SK-N-SH (cell line): ENCODE measurements at regions of chr4 and their contacts with region 1.

Region 1: GRCh38 chr4:119628308-119629141 is at the start of gene PDE5A:
- DNase-seq: peak; percentile 85
- H3K4me3 ChIP-seq: peak within 1 kb of the TSS; percentile 82 to 89
- H3K27ac ChIP-seq: peak within 1 kb of the TSS in 1 of 2 experiments; percentile 50; a peak in 3 of 4 replicates
- H3K4me1 ChIP-seq: peaks cover 5 to 7% of the 10 kb centered on the region in 2 experiments; a peak in 3 of 4 replicates
- H3K27me3 ChIP-seq: no peaks in the 10 kb centered on the region
- CTCF ChIP-seq: peak; percentile 88
- EP300 ChIP-seq: no peak
- RAD21 ChIP-seq: peak; percentile 81
- polyA plus RNA-seq, gene PDE5A: 6.4 and 10.1 TPM in 2 replicates

Region 2: DNA sequence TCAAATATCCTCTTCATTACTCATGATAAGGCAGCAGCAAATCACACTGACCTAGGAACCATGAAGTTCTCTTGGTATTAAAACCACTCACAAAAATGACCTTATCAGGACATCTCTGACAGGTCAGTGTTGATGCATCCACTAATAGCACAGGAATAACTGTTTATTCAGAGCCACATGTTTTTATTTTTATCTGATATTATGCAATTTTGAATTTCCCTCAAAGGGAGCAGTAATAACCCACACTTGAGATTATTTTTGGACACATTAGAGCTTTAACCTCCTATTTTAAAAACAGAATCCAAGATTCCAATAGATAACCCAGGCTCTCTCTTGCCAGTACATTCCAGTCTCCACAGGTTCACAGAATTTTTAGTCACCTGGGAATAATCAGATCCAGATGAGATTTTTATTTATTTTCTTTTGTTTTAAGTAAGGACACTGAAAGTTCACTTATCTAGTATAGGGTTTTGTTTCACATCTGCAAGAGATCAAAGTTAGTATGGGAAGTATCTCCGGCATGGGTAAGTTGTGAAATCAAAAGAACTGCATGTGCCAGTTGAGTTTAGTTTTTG is 529.2 kb before region 1 on chr4:
- CTCF ChIA-PET with region 1: no interaction called
- POLR2A ChIA-PET with region 1: no interaction called
- DNase-seq: peak; percentile 27
- H3K4me3 ChIP-seq: no peak overlapping the region
- H3K27ac ChIP-seq: 0 out of 4 replicates have a peak overlapping the region, but pooled peaks of 1 of the 2 experiments have one; percentile 9
- H3K4me1 ChIP-seq: peaks cover 4 to 23% of the 10 kb centered on the region in 2 experiments; a peak in 2 of 4 replicates
- H3K27me3 ChIP-seq: no peaks in the 10 kb centered on the region
- CTCF ChIP-seq: no peak
- EP300 ChIP-seq: peak; percentile 19 to 86; a peak in 3 of 4 replicates
- RAD21 ChIP-seq: no peak

Region 3: DNA sequence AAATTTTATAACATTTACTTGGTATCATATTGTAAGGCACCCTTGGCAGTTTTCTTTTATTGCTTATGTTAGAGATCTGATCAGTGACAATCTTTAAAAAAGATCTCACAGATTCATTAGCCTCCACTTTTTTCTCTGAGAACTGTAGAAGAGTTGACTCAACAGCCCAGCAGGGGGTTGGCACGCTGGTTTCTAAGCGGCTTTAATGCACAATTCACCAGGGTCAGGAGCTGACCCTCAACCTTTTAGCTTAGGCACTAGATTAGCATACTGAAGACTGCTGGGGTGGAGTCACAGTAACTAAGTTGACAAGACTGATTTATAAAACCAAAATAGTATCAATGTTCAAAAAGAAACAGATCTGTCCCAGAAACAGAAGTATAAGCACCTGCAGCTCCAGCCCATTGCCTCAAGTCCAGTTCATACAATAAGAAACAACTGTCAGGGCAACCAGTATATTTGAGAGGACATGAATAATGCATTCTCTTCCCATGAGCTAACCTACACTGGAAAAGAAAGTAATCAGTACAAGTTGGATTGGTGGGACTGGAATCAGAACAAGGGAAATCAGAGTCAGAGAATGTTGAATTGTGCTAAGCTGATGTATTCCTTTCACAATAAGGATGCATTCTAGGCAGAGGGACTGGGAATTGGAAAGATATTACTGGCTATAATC is 77.5 kb before region 1 on chr4:
- CTCF ChIA-PET with region 1: interaction called, 68 read pairs
- POLR2A ChIA-PET with region 1: no interaction called
- DNase-seq: no peak
- H3K4me3 ChIP-seq: no peak overlapping the region
- H3K27ac ChIP-seq: no peak overlapping the region
- H3K4me1 ChIP-seq: no peaks in the 10 kb centered on the region; a peak in 2 of 4 replicates
- H3K27me3 ChIP-seq: no peaks in the 10 kb centered on the region
- CTCF ChIP-seq: no peak
- EP300 ChIP-seq: no peak
- RAD21 ChIP-seq: no peak

Region 4: DNA sequence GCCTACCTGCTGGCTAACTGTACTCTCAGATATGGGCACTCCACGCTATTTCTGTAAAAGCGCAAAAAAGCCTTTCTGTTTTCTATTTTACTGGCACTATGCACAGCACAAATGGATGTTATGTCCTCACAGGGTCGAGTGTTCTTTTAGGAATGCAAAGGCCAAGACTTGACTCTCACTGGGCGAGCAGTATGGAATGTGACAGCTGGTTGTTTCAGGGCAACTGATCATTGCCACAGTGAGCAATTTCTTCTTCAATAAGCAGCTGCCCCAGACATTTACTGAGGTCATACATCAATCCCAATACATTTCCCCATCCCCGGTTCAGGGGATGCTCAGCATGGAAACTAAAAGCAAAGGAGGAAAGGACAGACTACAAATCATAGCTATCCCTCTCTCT is 58.1 kb before region 1 on chr4:
- CTCF ChIA-PET with region 1: interaction called, 17 read pairs
- POLR2A ChIA-PET with region 1: no interaction called
- DNase-seq: no peak
- H3K4me3 ChIP-seq: no peak overlapping the region
- H3K27ac ChIP-seq: no peak overlapping the region
- H3K4me1 ChIP-seq: no peaks in the 10 kb centered on the region
- H3K27me3 ChIP-seq: no peaks in the 10 kb centered on the region
- CTCF ChIP-seq: no peak
- EP300 ChIP-seq: no peak
- RAD21 ChIP-seq: no peak

Region 5: DNA sequence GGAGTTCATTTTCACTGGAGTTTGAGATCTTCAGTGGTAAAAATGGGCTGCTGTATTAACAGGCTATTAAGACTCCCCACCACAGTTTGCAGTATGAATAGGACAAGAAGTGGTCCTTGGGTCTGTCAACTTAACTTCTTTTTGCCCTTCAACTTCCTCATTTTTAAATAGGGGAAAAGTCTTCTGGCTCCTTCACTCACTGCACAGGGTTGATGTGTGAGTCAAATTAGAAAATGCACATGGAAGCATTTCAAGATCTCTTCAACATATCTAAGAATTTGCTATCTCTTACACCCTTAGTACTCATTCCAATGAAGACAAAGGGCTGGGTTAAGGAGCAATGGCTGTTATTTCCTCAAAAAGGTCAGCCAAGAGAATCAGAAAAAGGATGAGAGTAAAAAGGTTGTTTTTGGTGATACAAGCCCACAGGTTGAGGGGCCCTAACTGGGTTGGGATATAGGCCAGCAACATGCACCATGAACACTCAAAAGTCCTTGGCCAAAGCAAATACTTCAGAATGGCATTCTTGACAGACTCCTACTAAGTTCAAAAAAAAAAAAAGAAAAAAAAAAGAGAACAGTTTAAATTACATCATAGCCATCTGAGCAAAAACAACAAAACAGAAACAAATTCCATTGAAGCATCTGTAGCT is 13.3 kb before region 1 on chr4:
- CTCF ChIA-PET with region 1: interaction called, 22 read pairs
- POLR2A ChIA-PET with region 1: no interaction called
- DNase-seq: no peak
- H3K4me3 ChIP-seq: no peak overlapping the region
- H3K27ac ChIP-seq: no peak overlapping the region
- H3K4me1 ChIP-seq: 0 out of 4 replicates have a peak, but pooled peaks cover 0 to 5% of the 10 kb centered on the region in 2 experiments
- H3K27me3 ChIP-seq: no peaks in the 10 kb centered on the region
- CTCF ChIP-seq: no peak
- EP300 ChIP-seq: no peak
- RAD21 ChIP-seq: no peak

Region 6: GRCh38 chr4:119678761-119679160 is 50.2 kb after region 1 on chr4:
- CTCF ChIA-PET with region 1: interaction called, 10 read pairs
- POLR2A ChIA-PET with region 1: no interaction called
- DNase-seq: no peak
- H3K4me3 ChIP-seq: no peak overlapping the region
- H3K27ac ChIP-seq: no peak overlapping the region
- H3K4me1 ChIP-seq: peaks cover 0 to 8% of the 10 kb centered on the region in 2 experiments; a peak in 1 of 4 replicates
- H3K27me3 ChIP-seq: no peaks in the 10 kb centered on the region
- CTCF ChIP-seq: no peak
- EP300 ChIP-seq: no peak
- RAD21 ChIP-seq: no peak

Region 7: DNA sequence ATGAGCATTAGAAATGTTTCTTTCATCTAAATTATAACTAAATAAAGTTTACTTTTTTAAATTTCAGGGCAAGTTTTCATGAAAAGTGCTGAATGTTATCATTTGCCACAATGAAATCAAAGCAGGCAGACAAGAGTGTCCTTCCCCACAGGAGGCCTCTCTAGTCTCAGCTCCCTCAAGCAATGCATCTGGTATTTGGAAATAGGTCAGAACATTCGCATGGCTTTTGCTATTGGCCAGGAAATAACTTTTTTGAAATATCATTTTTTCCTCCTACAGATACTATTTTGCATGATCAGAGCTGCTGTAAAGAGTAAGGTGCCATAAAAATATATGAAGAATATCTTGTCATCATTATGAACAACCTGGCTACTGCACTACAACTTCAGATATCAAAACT is 397.0 kb after region 1 on chr4:
- CTCF ChIA-PET with region 1: interaction called, 13 read pairs
- POLR2A ChIA-PET with region 1: no interaction called
- DNase-seq: no peak
- H3K4me3 ChIP-seq: no peak overlapping the region
- H3K27ac ChIP-seq: no peak overlapping the region
- H3K4me1 ChIP-seq: no peaks in the 10 kb centered on the region
- H3K27me3 ChIP-seq: no peaks in the 10 kb centered on the region
- CTCF ChIP-seq: no peak
- EP300 ChIP-seq: no peak
- RAD21 ChIP-seq: no peak

Region 8: DNA sequence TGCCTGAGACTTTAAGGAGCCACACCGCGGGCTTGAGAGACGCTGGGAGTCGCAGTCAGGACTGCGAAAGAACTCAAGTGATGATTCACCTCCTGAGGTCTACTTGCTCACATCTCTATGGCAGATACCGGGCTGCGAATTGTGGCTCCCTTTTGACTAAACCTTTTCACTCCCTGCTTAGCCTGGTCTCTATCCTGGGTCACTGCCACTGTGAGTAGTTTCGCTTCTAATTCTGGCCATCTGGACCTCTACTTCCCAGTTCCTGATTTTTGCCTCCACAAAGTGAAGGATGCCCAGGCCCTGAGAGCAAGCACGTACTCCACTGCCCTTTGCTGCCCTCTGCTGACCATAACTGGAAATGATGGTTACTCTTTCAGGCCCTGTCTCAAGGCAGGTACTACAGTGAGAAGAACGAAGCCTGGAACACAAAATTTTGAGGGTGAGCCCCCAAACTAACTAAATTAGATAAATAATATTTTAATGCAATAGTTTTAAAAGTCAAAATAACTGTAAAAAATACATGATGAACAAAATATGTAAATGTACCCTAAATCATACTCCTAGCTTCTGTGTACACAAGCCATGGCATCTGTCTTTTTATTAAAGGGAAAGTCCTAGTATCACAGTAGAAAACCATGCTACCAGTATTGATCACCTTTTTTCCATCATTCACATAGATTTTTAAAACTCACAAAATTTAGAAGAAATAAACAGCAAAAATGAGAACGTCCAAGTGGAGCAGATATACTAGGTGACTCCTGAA is 421.4 kb after region 1 on chr4:
- CTCF ChIA-PET with region 1: interaction called, 192 read pairs
- POLR2A ChIA-PET with region 1: no interaction called
- DNase-seq: peak; percentile 56
- H3K4me3 ChIP-seq: 0 out of 4 replicates have a peak overlapping the region, but pooled peaks of 1 of the 2 experiments have one; percentile 33
- H3K27ac ChIP-seq: no peak overlapping the region
- H3K4me1 ChIP-seq: peaks cover 0 to 3% of the 10 kb centered on the region in 2 experiments; a peak in 1 of 4 replicates
- H3K27me3 ChIP-seq: no peaks in the 10 kb centered on the region
- CTCF ChIP-seq: peak; percentile 86
- EP300 ChIP-seq: no peak
- RAD21 ChIP-seq: peak; percentile 98